ENCODE measurements at regions of chr5 and their contacts with region 1.

Region 1: DNA sequence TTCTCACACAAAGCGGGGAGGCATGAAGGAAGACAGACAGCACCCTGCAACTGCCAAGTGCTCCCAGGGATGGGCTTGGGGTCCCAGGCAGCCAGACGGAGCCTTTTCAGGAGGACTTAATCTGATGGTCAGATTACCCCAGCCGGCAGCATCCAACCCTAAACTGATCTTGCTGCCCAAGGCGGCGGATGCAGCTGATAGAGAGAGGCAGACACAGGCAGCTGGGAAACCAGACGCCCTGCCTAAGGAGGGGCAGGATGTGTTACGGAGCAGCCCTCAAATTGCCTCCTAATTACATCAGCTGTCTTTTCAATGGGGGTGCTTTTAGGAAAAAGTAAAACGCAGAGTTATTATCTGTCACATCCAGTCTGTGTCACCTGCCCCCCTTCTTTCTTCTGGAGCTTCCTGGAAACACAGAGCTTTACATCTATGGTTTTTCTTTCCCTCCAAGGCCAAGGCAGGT is 190.9 kb upstream of the PANK3 start:
- DNase-seq: peak; percentile 87
- H3K4me3 ChIP-seq: no peak overlapping the region
- H3K27ac ChIP-seq: peak overlapping the region in 1 of 2 experiments; percentile 100; a peak in 2 of 4 replicates
- H3K4me1 ChIP-seq: peaks cover 15 to 89% of the 10 kb centered on the region in 2 experiments; a peak in 3 of 4 replicates
- H3K27me3 ChIP-seq: no peaks in the 10 kb centered on the region
- CTCF ChIP-seq: no peak
- EP300 ChIP-seq: peak; percentile 49 to 100; a peak in 3 of 4 replicates
- RAD21 ChIP-seq: 0 out of 2 replicates have a peak, but pooled peaks have one; percentile 18

Region 2: DNA sequence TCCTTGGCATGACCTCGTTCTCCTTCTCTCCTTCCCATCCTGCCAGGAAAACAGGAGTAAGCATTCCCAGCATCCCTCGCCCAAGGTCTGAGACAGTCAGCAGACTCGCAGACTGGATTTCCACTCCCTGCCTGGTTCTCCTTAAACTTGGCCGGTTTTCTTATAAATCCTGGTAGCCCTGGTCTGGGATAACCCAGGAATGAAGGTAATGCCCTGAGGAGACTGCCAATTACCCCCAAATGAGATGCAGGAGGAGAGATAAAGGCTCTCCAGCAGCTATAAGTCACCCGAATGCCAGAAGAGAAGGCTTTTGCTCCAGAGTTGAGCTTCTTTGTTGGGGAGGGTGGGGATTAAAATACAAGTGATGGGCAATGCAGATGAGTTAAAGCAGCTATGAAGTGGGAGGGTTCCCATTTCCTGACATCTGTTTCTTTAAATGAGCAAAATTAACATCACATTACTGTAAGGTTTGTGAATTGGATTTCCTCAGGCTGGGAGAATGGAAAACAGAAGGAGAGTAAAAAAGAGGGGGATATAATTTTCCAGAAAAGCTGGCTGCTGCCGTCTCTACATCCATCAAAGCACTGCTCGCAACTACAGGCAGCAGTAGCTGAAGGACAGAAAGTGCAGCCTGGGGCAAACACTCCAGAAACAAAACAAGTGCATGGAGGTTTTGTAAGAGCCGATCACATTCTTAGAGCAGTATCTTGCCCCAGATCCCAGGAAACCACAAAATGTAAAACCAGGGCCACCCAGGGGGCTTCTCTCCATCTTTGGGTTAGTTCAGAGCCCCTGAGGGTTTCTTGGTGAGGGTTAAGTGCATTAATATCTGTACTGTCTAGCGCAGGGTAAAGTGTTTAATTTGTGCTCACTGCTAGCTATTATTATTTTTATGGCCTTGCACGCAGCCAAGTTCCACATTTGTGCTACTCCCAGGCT is 13.3 kb before region 1 on chr5:
- CTCF ChIA-PET with region 1: interaction called, 3 read pairs
- POLR2A ChIA-PET with region 1: interaction called, 15 read pairs
- DNase-seq: peak; percentile 58
- H3K4me3 ChIP-seq: no peak overlapping the region
- H3K27ac ChIP-seq: peak overlapping the region in 1 of 2 experiments; percentile 91; a peak in 2 of 4 replicates
- H3K4me1 ChIP-seq: peaks cover 0 to 57% of the 10 kb centered on the region in 2 experiments; a peak in 2 of 4 replicates
- H3K27me3 ChIP-seq: no peaks in the 10 kb centered on the region
- CTCF ChIP-seq: no peak
- EP300 ChIP-seq: no peak; a peak in 1 of 4 replicates
- RAD21 ChIP-seq: no peak

Region 3: GRCh38 chr5:168813184-168813968 is 43.3 kb after region 1 on chr5:
- CTCF ChIA-PET with region 1: interaction called, 4 read pairs
- POLR2A ChIA-PET with region 1: interaction called, 17 read pairs
- DNase-seq: peak; percentile 73
- H3K4me3 ChIP-seq: no peak overlapping the region
- H3K27ac ChIP-seq: peak overlapping the region; percentile 19 to 99; a peak in 3 of 4 replicates
- H3K4me1 ChIP-seq: peaks cover 0 to 80% of the 10 kb centered on the region in 2 experiments; a peak in 2 of 4 replicates
- H3K27me3 ChIP-seq: no peaks in the 10 kb centered on the region
- CTCF ChIP-seq: no peak
- EP300 ChIP-seq: peak; percentile 43 to 99; a peak in 3 of 4 replicates
- RAD21 ChIP-seq: peak; percentile 17

Region 4: DNA sequence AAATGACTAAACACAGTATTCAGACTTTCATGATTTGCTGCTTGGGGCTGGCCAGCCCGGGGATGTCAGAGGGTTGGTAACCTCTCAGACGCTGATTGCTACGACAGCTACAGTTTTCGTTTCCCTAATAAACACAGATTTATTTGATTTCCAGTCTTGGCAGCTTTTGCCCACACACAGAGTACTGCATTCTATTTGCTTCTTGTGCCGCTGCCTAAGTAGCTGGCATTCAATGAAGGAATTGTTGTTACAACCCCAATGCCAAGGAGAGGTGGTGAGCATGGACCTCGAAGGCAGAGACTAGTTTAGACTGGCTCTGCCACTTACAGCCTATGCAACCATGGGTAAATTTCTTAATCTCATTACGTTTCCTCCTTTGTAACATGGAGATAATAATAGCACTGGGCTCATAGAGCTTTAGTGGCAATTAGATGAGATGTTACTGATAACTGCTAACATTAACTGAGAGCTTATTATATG is 56.2 kb after region 1 on chr5:
- CTCF ChIA-PET with region 1: interaction called, 3 read pairs
- POLR2A ChIA-PET with region 1: interaction called, 10 read pairs
- DNase-seq: peak; percentile 41
- H3K4me3 ChIP-seq: no peak overlapping the region
- H3K27ac ChIP-seq: peak overlapping the region in 1 of 2 experiments; percentile 87; a peak in 2 of 4 replicates
- H3K4me1 ChIP-seq: peaks cover 0 to 95% of the 10 kb centered on the region in 2 experiments; a peak in 3 of 4 replicates
- H3K27me3 ChIP-seq: no peaks in the 10 kb centered on the region
- CTCF ChIP-seq: no peak
- EP300 ChIP-seq: peak in 1 of 2 experiments; percentile 81; a peak in 2 of 4 replicates
- RAD21 ChIP-seq: peak; percentile 24

Region 5: DNA sequence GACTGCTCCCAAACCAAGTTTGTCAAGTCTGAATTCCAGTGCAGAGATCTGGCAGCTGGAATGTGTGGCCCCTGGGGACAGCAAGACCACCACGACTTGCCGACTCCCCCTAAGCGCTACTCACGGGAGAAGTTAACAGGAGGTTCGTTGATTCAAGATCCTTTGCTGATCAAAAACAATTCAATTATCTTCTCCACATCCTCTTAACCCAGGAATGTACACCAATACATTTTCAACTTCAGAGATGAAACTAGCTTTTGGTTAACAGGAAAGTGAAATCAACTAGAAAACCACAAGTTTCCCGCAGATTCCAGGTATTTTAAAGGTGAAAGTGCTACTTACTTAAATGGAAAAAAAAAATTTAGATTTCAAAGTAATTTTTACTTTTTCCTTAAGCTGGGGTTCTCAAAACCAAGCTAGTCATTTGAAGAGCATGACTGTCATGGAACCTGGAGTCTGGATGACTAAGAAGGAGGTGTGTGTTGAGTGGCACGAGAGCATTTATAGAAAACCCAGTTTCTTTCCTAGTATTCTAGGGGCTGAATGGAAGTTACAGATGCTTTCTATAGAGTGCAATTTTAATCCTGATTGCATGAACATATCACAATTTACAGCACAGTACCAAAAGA is 66.7 kb after region 1 on chr5:
- CTCF ChIA-PET with region 1: no interaction called
- POLR2A ChIA-PET with region 1: interaction called, 37 read pairs
- DNase-seq: no peak
- H3K4me3 ChIP-seq: peak overlapping the region in 1 of 2 experiments; percentile 25; a peak in 1 of 4 replicates
- H3K27ac ChIP-seq: peak overlapping the region in 1 of 2 experiments; percentile 96; a peak in 2 of 4 replicates
- H3K4me1 ChIP-seq: peaks cover 0 to 60% of the 10 kb centered on the region in 2 experiments; a peak in 2 of 4 replicates
- H3K27me3 ChIP-seq: no peaks in the 10 kb centered on the region
- CTCF ChIP-seq: no peak
- EP300 ChIP-seq: no peak
- RAD21 ChIP-seq: no peak

Region 6: GRCh38 chr5:168885324-168886120 is 115.5 kb after region 1 on chr5:
- CTCF ChIA-PET with region 1: interaction called, 12 read pairs
- POLR2A ChIA-PET with region 1: interaction called, 14 read pairs
- DNase-seq: peak; percentile 67
- H3K4me3 ChIP-seq: no peak overlapping the region
- H3K27ac ChIP-seq: peak overlapping the region; percentile 49 to 100; a peak in 3 of 4 replicates
- H3K4me1 ChIP-seq: peaks cover 13 to 68% of the 10 kb centered on the region in 2 experiments
- H3K27me3 ChIP-seq: no peaks in the 10 kb centered on the region
- CTCF ChIP-seq: no peak
- EP300 ChIP-seq: peak in 1 of 2 experiments; percentile 99; a peak in 3 of 4 replicates
- RAD21 ChIP-seq: peak; percentile 40

Region 7: DNA sequence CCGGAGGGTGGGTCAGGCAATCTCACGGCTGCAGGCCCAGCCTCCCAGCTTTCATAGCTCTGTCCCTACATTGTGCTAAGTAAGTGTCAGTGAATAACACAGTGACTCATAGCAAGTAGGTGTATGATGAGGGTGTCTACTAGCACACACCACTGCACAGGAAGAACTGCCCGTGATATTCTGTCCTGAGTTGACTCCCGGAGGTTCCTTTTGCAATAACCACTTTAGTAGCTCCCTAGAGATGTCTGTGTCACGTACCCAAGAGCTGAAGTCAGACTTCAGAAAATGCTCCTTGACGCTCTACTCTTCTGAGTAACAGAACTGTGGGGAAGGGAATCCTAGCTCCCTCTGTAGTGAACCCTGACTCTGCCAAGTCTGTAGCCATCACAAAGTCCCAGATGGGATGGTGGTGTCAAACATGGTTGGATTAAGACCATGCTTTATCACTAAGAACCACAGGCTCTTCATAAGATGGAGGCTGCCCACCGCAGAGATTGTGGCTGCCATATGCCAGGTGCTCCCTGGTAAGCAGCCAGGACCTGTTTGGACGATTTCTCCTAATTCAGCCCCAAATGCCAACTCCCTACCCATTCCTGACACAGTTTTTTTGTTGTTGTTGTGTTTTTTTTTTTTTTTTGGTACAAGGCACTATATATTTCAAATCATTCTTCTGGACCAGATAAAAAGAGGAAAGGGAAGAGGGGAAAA is 161.7 kb after region 1 on chr5:
- CTCF ChIA-PET with region 1: no interaction called
- POLR2A ChIA-PET with region 1: no interaction called
- DNase-seq: no peak
- H3K4me3 ChIP-seq: no peak overlapping the region
- H3K27ac ChIP-seq: no peak overlapping the region
- H3K4me1 ChIP-seq: peaks cover 0 to 4% of the 10 kb centered on the region in 2 experiments; a peak in 1 of 4 replicates
- H3K27me3 ChIP-seq: no peaks in the 10 kb centered on the region
- CTCF ChIP-seq: no peak
- EP300 ChIP-seq: no peak
- RAD21 ChIP-seq: no peak

Measured in SK-N-SH (cell line).